Natural killer cell (primary cell): ENCODE measurements at regions of chr22 and their contacts with region 1.

Region 1: GRCh38 chr22:23219822-23220484 is 39.6 kb downstream of the BCR start:
- DNase-seq: peak; percentile 54 to 55
- ATAC-seq: peak; percentile 58 to 80 (median 63)
- H3K4me3 ChIP-seq: no peak overlapping the region
- H3K4me3 Mint-ChIP-seq: peak overlapping the region; percentile 88
- H3K27ac ChIP-seq: peak overlapping the region; percentile 32
- H3K27ac Mint-ChIP-seq: peak overlapping the region; percentile 92 to 96
- H3K4me1 ChIP-seq: peaks cover 93% of the 10 kb centered on the region
- H3K4me1 Mint-ChIP-seq: peaks cover 97 to 99% of the 10 kb centered on the region in 2 donors
- H3K27me3 ChIP-seq: no peaks in the 10 kb centered on the region
- H3K27me3 Mint-ChIP-seq: no peaks in the 10 kb centered on the region
- CTCF ChIP-seq: no peak

Region 2: GRCh38 chr22:23144932-23145873 is 74.8 kb before region 1 on chr22 and contains the start of gene RAB36:
- intact Hi-C with region 1: loop called (anchors 2 kb)
- DNase-seq: peak; percentile 93 to 97
- ATAC-seq: peak; percentile 67 to 74 (median 71)
- H3K4me3 ChIP-seq: peak within 1 kb of the TSS; percentile 33
- H3K4me3 Mint-ChIP-seq: peak within 1 kb of the TSS; percentile 87
- H3K27ac ChIP-seq: peak within 1 kb of the TSS; percentile 76
- H3K27ac Mint-ChIP-seq: peak within 1 kb of the TSS; percentile 94 to 96
- H3K4me1 ChIP-seq: peaks cover 57% of the 10 kb centered on the region
- H3K4me1 Mint-ChIP-seq: peaks cover 37 to 57% of the 10 kb centered on the region in 2 donors
- H3K27me3 ChIP-seq: no peaks in the 10 kb centered on the region
- H3K27me3 Mint-ChIP-seq: no peaks in the 10 kb centered on the region
- CTCF ChIP-seq: no peak
- total RNA-seq, gene RAB36: 1.7 to 2.9 (median 2.6) TPM

Region 3: GRCh38 chr22:23192181-23192957 is 27.6 kb before region 1 on chr22:
- intact Hi-C with region 1: no loop called
- DNase-seq: no peak
- ATAC-seq: no peak
- H3K4me3 ChIP-seq: no peak overlapping the region
- H3K4me3 Mint-ChIP-seq: no peak overlapping the region
- H3K27ac ChIP-seq: no peak overlapping the region
- H3K27ac Mint-ChIP-seq: peak overlapping the region; percentile 16 to 81
- H3K4me1 ChIP-seq: peaks cover 10% of the 10 kb centered on the region
- H3K4me1 Mint-ChIP-seq: peaks cover 52 to 69% of the 10 kb centered on the region in 2 donors
- H3K27me3 ChIP-seq: no peaks in the 10 kb centered on the region
- H3K27me3 Mint-ChIP-seq: no peaks in the 10 kb centered on the region
- CTCF ChIP-seq: no peak

Region 4: DNA sequence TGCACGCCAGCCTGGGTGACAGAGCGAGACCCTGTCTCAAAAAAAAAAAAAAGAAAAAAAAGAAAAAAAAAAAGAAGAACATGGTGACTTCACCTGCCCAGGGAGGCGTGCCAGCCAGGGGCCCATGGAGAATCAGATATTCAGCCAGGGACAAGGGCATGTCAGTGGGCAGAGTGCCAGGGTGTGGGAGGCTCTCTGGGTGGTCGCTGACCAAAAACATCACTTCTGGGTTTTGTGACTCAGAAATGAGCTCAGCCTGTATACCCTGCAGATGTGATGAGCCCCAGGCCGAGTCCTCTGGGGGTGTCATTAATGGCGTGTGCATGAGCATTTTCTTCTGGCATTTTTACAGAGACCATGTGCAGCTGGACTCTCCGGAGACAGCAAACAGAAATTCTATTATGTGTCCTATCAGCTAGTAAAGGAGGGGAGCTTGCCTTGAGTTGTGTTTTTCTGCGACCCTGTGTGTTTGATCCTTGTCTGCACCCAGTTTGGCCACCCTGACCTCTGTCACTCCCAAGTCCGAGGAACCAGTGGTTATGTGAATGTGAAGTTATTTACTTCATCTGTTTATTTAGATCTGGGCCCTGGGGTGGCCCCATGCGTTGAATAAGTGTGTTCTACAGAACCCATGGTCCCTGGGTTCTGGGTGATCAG is 13.9 kb after region 1 on chr22:
- intact Hi-C with region 1: loop called (anchors 2 kb)
- DNase-seq: no peak
- ATAC-seq: no peak
- H3K4me3 ChIP-seq: no peak overlapping the region
- H3K4me3 Mint-ChIP-seq: peak overlapping the region; percentile 72
- H3K27ac ChIP-seq: no peak overlapping the region
- H3K27ac Mint-ChIP-seq: peak overlapping the region; percentile 36 to 81
- H3K4me1 ChIP-seq: peaks cover 70% of the 10 kb centered on the region
- H3K4me1 Mint-ChIP-seq: peaks cover 75 to 81% of the 10 kb centered on the region in 2 donors
- H3K27me3 ChIP-seq: no peaks in the 10 kb centered on the region
- H3K27me3 Mint-ChIP-seq: no peaks in the 10 kb centered on the region
- CTCF ChIP-seq: no peak

Region 5: GRCh38 chr22:23243006-23243573 is 23.1 kb after region 1 on chr22:
- intact Hi-C with region 1: loop called (anchors 2 kb)
- DNase-seq: peak; percentile 36 to 88
- ATAC-seq: peak; percentile 66 to 74 (median 67)
- H3K4me3 ChIP-seq: no peak overlapping the region
- H3K4me3 Mint-ChIP-seq: peak overlapping the region; percentile 81
- H3K27ac ChIP-seq: peak overlapping the region; percentile 44
- H3K27ac Mint-ChIP-seq: peak overlapping the region; percentile 83 to 93
- H3K4me1 ChIP-seq: peaks cover 93% of the 10 kb centered on the region
- H3K4me1 Mint-ChIP-seq: peaks cover 89 to 92% of the 10 kb centered on the region in 2 donors
- H3K27me3 ChIP-seq: no peaks in the 10 kb centered on the region
- H3K27me3 Mint-ChIP-seq: no peaks in the 10 kb centered on the region
- CTCF ChIP-seq: no peak

Region 6: GRCh38 chr22:23281406-23282088 is 61.6 kb after region 1 on chr22:
- intact Hi-C with region 1: loop called (anchors 5 kb)
- DNase-seq: peak; percentile 86 to 90
- ATAC-seq: peak; percentile 69 to 82 (median 72)
- H3K4me3 ChIP-seq: no peak overlapping the region
- H3K4me3 Mint-ChIP-seq: peak overlapping the region; percentile 4
- H3K27ac ChIP-seq: peak overlapping the region; percentile 38
- H3K27ac Mint-ChIP-seq: peak overlapping the region; percentile 82 to 87
- H3K4me1 ChIP-seq: peaks cover 60% of the 10 kb centered on the region
- H3K4me1 Mint-ChIP-seq: peaks cover 32 to 52% of the 10 kb centered on the region in 2 donors
- H3K27me3 ChIP-seq: no peaks in the 10 kb centered on the region
- H3K27me3 Mint-ChIP-seq: no peaks in the 10 kb centered on the region
- CTCF ChIP-seq: peak; percentile 98